Posterior cingulate gyrus (tissue), 11 donors: ENCODE measurements at regions of chrX and their contacts with region 1.

Region 1: DNA sequence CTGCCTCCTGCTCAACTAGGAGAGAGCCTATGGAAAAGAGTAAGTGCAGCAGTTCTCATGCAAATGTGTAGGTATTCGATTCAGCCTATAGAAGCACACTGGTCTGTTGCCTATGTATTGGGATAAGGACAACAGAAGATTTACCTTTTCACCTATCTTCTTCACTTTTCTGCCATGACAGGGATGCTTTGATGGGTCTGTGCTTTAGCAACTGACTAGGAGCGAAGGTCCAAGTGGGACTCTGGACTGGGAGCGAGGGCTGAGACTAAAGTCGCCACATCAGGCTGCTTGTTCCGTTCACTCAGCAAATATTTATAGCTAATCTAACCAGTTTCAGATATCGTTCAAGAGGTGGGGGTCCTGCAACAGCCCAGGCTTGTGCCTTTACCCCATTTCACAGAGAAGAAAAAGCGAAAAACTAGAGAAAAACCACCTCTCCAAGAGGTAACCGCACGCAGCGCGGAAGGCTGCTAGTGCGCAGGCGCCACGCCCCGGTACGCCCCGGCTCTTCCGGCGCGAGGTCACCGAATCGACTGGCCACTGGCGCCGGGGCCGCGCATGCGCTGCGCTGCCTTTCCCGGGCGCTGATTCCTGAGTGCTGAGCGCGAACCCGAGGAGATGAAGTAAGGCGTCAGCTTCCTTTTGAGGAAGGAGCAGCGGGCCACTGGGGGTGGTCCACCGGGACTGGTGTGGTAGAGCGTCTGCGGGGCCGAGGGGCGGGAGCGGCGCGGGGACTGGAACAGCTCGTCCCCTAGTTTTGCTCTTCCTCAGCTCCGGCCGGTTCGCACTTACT is at the start of gene RBMX2:
- DNase-seq: peak; percentile 52 to 97 (median 68)

Region 2: GRCh38 chrX:130228871-130229270 is 172.7 kb before region 1 on chrX:
- intact Hi-C with region 1: no loop called
- DNase-seq: no peak

Region 3: DNA sequence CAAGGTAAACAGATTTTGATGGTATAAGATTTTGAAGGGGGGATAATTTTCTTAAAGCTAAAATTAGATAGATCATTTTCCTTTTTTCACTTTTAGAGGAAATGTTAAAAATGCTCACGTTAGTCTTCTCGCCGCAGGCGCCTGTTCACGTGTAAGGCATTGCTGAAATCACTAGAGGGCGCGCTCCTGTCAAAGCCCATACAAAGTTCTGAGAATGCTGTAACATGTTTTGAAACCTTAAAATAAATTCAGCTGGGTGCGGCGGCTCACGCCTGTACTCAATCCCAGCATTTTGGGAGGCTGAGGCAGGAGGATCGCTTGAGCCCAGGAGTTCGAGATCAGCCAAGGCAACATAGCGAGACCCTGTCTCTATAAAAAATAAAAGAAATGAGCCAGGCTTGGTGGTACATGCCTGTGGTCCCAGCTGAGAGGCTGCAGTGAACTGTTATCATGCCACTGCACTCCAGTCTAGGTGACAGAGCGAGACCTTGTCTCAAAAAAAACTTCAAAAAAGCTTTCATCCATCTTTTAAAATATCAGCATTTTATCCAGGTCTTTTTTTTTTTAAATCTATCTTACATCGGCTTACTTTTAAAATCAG is 138.2 kb after region 1 on chrX:
- intact Hi-C with region 1: loop called (anchors 10 kb)
- DNase-seq: peak in 6 of 10 donors; percentile 19 to 60 (median 43)

Region 4: DNA sequence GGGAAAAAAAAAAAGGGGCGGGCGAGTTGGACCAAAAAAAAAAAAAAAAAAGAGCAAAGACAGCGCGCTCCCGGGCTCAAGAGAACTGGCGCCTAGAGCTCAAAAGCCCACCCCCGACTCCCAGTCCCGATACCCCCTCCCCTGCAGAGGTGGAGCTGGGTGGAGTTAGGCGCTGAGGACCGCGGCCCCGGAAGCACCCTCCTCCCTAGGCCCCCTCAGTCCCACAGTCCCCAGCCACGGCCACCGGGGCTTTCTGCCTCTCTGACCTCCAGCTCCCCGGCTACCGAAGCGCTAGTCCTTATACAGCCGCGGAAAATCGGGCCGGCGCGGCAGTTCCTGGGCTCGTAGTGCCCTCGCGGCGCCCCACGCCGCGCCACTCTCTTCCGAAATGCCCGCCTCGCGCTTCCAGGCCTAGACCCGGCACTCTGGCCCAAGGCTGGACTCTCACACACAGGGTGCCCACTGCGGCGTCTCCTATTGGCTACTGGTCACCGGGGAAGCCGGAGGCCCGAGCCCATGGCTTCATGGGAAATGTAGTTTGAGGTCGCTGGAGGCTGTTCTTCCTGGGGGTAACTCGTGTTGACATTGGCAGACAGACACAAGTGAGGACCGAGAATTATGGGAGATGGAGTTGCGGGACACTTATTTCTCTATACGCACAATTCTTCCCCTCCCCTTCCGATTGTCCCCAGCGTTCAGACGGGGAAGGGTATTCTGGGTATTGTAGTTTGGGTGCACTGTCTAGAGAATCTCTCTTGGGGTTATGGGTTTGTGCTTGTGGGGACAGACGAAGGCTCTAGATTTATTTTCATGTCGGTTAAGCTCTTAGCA is 501.4 kb after region 1 on chrX and contains the start of gene ENOX2:
- intact Hi-C with region 1: loop called (anchors 5 kb)
- DNase-seq: peak; percentile 86 to 99 (median 92)